ENCODE measurements at regions of chr1 and their contacts with region 1.

Region 1: DNA sequence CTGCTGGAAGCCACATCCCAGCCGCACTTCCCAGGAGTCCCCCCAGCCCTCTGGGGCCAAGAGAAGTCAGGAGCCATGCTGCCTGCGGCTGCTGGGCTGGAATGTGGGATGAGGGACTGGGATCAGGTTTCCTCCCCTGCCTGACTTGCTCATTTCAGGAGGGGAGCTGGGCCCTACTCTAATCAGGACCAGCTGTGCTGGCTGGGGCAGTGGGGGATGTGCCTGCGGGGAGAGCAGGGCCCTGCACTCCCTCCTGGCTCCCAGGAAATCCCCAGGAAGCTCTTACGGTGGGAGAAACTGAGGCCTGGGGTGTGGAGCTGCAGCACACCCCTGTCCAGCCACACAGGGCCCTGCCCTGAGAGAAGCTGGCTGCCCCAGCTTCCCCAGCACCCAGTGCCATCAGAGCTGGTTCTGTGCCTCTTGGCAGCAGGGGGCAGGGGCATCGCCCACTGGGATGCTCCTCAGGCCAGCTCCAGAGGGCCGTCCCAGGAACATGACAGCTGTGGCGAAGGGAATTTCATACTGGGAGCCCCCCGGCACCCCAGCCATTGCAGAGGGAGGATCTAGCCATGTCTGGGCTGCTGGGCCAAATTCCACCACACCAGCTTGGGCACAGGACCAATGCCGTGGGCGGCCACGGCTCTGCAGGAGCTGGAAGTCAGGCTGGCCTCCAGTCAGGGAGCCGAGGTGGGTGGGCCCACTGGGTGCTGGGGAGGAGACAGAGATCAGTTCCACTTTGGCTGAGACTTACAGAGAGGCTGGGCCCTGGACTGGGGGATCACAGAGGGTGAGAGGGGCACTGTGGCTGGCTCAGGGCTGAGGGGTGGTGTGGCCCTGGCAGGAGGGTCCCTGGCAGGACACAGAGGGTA is 21.3 kb upstream of the PRSS38 start:
- DNase-seq: peak; percentile 71
- H3K4me3 ChIP-seq: peak overlapping the region; percentile 34
- CTCF ChIP-seq: no peak

Region 2: DNA sequence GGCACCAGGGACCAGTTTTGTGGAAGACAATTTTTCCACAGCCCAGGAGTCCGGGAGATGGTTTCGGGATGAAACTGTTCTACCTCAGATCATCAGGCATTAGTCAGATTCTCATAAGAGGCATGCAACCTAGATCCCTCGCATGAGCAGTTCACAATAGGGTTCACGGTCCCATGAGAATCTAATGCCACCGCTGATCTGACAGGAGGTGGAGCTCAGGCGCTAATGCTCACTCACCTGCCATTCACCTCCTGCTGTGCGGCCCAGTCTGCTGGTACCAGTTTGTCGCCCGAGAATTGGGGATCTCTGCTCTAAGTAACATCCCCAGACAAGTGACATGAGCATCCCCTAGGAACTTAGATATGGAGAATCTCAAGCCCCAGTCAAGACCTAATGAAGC is 673.4 kb before region 1 on chr1:
- CTCF ChIA-PET with region 1: no interaction called
- POLR2A ChIA-PET with region 1: no interaction called
- DNase-seq: no peak
- H3K4me3 ChIP-seq: no peak overlapping the region
- CTCF ChIP-seq: no peak

Region 3: GRCh38 chr1:227778401-227778947 is 15.7 kb before region 1 on chr1:
- CTCF ChIA-PET with region 1: interaction called, 11 read pairs
- POLR2A ChIA-PET with region 1: interaction called, 18 read pairs
- DNase-seq: no peak
- H3K4me3 ChIP-seq: no peak overlapping the region
- CTCF ChIP-seq: no peak

Region 4: GRCh38 chr1:227805606-227806197 is 11.5 kb after region 1 on chr1:
- CTCF ChIA-PET with region 1: interaction called, 5 read pairs
- POLR2A ChIA-PET with region 1: interaction called, 15 read pairs
- DNase-seq: peak; percentile 40
- H3K4me3 ChIP-seq: no peak overlapping the region
- CTCF ChIP-seq: no peak

Measured in AG04449 (cell line).